Naive thymus-derived CD8-positive, alpha-beta T cell (primary cell): ENCODE measurements at regions of chr6 and their contacts with region 1.

Region 1: GRCh38 chr6:42745707-42746462 is at the start of gene TBCC:
- DNase-seq: peak; percentile 81 to 98 (median 94)
- ATAC-seq: peak; percentile 70 to 75
- H3K4me3 Mint-ChIP-seq: peak within 1 kb of the TSS; percentile 90 to 100 (median 100)
- H3K27ac Mint-ChIP-seq: peak within 1 kb of the TSS; percentile 99 to 100 (median 100)
- H3K4me1 Mint-ChIP-seq: peaks cover 14 to 45% (median 36%) of the 10 kb centered on the region in 4 donors
- H3K27me3 Mint-ChIP-seq: no peaks in the 10 kb centered on the region
- polyA plus RNA-seq, gene TBCC: 112 to 126 (median 125) TPM

Region 2: DNA sequence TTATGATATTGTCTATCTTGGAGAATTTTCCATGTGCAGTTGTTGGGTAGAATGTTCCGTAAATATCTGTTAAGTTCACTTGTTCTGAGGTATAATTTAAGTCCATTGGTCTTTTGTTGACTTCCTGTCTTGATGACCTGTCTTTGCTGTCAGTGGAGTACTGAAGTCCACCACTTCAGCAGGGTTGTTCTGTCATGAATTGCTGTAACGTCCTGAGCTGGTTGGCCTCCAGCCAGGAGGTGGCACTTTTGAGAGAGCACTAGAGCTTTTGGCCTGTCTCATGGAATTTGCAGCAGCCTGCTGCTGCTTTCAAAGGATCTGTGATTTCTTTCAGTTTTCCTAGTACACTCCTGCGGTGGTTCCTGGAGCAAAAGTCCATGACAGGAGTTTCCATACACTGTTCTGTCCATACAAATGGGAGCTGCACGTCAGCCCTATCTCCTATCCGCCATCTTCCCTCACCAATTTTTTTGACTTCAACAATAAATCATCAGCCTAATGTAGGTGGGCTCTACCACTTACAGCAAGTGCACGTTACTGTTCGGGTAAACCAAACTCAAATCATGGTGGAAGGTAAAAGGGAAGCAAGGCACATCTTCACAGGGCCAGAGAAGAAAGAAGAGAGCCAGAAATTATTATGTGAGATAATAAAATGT is 247.3 kb before region 1 on chr6:
- POLR2A ChIA-PET with region 1: no interaction called
- DNase-seq: no peak
- ATAC-seq: no peak
- H3K4me3 Mint-ChIP-seq: no peak overlapping the region
- H3K27ac Mint-ChIP-seq: peak overlapping the region in 1 of 10 donors; percentile 14
- H3K4me1 Mint-ChIP-seq: peaks cover 0 to 6% (median 0%) of the 10 kb centered on the region in 4 donors
- H3K27me3 Mint-ChIP-seq: peaks cover 0 to 1% (median 0%) of the 10 kb centered on the region in 5 donors

Region 3: DNA sequence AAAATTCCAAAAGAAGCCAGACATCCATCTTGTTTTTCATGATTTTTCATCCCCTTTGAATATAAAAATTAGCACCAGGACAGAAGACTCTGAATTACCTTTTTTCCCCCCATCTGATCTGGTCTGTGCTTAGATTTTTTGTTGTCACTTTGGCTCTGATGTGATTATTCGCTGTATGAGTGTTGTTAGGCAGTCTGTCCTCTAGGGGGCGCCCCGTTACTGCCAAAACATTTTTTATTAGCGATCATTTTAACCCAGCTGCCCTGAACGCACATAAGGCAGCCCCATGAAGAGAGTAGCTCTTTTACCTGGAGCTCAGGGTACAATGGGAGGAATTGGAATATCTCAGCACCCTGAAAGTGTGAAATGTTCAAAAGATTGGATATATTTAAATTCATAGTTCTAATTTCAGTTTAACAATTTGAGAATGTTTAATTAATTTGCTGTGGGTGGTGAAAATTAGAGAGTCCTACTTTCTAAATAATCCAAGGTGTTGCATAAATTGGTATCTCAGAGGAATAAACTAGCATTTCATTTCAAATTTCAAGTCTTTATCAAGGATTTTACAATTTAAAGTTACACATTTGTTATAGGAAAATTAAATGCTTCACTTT is 84.2 kb before region 1 on chr6:
- POLR2A ChIA-PET with region 1: interaction called, 10 read pairs
- DNase-seq: peak; percentile 69 to 93 (median 83)
- ATAC-seq: peak; percentile 93 to 96
- H3K4me3 Mint-ChIP-seq: no peak overlapping the region
- H3K27ac Mint-ChIP-seq: peak overlapping the region in 8 of 10 donors; percentile 2 to 62 (median 32)
- H3K4me1 Mint-ChIP-seq: peaks cover 0 to 4% (median 0%) of the 10 kb centered on the region in 4 donors
- H3K27me3 Mint-ChIP-seq: no peaks in the 10 kb centered on the region

Region 4: GRCh38 chr6:42726485-42727086 is 19.3 kb before region 1 on chr6:
- POLR2A ChIA-PET with region 1: interaction called, 209 read pairs
- DNase-seq: peak; percentile 43 to 91 (median 77)
- ATAC-seq: peak; percentile 93 to 98
- H3K4me3 Mint-ChIP-seq: peak overlapping the region; percentile 75 to 98 (median 90)
- H3K27ac Mint-ChIP-seq: peak overlapping the region; percentile 93 to 99 (median 98)
- H3K4me1 Mint-ChIP-seq: peaks cover 11 to 25% (median 19%) of the 10 kb centered on the region in 4 donors
- H3K27me3 Mint-ChIP-seq: no peaks in the 10 kb centered on the region

Region 5: DNA sequence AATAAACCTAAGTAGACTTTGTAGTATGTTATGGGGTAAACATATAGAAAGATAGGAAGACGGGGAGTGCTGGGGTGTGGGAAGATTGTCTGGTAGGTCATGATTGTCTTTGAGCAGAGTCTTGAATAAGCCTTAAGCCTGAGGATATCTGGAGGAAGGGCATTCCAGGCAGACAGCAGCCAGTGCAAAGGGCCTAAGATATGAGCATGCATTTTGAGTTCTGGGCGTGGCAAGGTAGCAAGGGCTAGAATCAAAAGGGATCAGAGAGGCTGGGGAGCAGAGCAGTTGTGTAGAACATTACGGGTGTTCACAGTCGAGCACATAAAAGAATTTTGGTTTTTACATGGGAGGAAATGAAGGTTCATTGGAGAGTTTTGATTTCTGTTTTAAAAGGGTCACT is 50.3 kb after region 1 on chr6:
- POLR2A ChIA-PET with region 1: interaction called, 852 read pairs
- DNase-seq: no peak
- ATAC-seq: peak in 1 of 2 donors; percentile 24
- H3K4me3 Mint-ChIP-seq: peak overlapping the region in 1 of 10 donors; percentile 55
- H3K27ac Mint-ChIP-seq: peak overlapping the region in 9 of 10 donors; percentile 2 to 78 (median 27)
- H3K4me1 Mint-ChIP-seq: peaks cover 11 to 31% (median 25%) of the 10 kb centered on the region in 4 donors
- H3K27me3 Mint-ChIP-seq: no peaks in the 10 kb centered on the region

Region 6: DNA sequence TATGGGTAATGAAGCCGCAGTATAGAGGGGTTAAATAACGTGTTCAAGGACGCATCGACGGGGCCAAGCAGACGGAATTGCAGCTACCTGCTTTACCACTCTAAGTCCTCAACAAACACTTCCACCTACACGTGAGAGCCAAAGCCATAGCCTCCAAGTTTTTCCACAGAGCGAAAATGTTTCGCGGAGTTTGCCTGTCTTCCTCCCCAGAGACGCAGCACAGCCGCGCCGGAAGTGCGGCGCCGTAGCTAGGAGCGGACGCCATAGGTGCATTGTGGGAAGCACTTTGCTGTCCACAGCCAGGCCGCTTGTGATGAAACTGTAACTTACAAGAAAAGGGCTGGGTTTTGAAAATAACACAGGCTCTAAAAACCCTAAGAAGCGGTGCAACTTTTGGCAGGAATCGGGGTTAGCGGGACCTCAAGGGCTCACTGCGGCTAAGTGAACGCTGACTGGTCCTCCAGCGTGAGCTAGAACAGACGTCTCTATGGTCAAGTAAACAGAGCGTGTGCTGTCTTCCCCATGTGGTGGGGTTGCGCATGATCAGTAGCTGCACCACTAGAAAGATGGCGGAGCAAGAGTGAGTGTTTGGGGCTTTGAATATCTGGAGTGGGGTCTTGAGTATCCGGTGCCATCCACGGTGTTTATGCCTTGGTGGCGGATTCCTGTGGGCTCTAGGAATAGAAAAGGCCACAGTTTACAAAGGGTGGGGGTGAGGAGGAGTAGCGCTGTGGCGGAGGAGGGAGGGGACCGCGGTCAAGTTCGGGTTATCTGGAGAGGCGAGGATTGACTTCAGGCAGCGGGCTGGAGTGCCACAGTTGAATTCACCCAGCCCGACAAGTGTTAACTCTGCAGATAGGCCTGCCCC is 133.7 kb after region 1 on chr6 and contains the start of gene RPL7L1:
- POLR2A ChIA-PET with region 1: interaction called, 80 read pairs
- DNase-seq: peak; percentile 67 to 93 (median 83)
- ATAC-seq: peak; percentile 92 to 93
- H3K4me3 Mint-ChIP-seq: peak within 1 kb of the TSS; percentile 92 to 100 (median 97)
- H3K27ac Mint-ChIP-seq: peak within 1 kb of the TSS; percentile 98 to 100 (median 100)
- H3K4me1 Mint-ChIP-seq: peaks cover 9 to 37% (median 35%) of the 10 kb centered on the region in 4 donors
- H3K27me3 Mint-ChIP-seq: no peaks in the 10 kb centered on the region
- polyA plus RNA-seq, gene RPL7L1: 65.3 to 87.9 (median 67.4) TPM